Sigmoid colon (tissue), 7 donors: ENCODE measurements at regions of chr13 and their contacts with region 1.

Region 1: DNA sequence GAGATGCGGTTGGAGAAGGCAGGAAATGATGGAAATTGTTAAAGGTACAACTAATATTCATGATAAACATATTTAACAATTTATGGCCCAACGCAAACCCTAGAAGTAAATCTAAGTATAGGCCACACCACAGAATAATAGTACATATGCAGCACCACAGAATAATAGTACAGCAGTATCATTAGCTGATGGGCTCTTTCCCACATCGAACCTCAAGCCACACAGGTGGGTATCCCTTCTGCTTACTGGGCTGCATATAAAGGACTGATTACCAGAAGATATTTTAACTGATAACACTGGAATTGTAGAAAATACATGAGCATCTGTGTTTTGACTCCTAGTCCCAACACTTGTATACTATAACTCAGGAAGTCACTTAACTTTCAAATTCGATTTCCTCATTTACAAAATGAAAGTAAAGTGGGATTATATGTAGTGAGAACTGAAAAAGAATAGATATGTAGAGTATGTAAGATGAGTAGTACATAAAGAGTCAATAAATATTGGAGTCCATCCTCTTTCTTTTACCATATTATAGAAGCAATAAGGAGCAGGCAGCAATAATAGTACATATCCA is 91.5 kb downstream of the TSC22D1 start:
- DNase-seq: no peak
- H3K4me3 ChIP-seq: no peak overlapping the region
- H3K27ac ChIP-seq: no peak overlapping the region
- H3K4me1 ChIP-seq: no peaks in the 10 kb centered on the region
- H3K27me3 ChIP-seq: no peaks in the 10 kb centered on the region
- CTCF ChIP-seq: no peak
- EP300 ChIP-seq: no peak
- POLR2A ChIP-seq: no peak

Region 2: GRCh38 chr13:44350775-44351509 is 133.7 kb before region 1 on chr13:
- intact Hi-C with region 1: no loop called
- DNase-seq: no peak
- H3K4me3 ChIP-seq: no peak overlapping the region
- H3K27ac ChIP-seq: no peak overlapping the region
- H3K4me1 ChIP-seq: peaks cover 0 to 33% (median 5%) of the 10 kb centered on the region in 4 donors
- H3K27me3 ChIP-seq: no peaks in the 10 kb centered on the region
- CTCF ChIP-seq: no peak
- EP300 ChIP-seq: no peak
- POLR2A ChIP-seq: no peak

Region 3: DNA sequence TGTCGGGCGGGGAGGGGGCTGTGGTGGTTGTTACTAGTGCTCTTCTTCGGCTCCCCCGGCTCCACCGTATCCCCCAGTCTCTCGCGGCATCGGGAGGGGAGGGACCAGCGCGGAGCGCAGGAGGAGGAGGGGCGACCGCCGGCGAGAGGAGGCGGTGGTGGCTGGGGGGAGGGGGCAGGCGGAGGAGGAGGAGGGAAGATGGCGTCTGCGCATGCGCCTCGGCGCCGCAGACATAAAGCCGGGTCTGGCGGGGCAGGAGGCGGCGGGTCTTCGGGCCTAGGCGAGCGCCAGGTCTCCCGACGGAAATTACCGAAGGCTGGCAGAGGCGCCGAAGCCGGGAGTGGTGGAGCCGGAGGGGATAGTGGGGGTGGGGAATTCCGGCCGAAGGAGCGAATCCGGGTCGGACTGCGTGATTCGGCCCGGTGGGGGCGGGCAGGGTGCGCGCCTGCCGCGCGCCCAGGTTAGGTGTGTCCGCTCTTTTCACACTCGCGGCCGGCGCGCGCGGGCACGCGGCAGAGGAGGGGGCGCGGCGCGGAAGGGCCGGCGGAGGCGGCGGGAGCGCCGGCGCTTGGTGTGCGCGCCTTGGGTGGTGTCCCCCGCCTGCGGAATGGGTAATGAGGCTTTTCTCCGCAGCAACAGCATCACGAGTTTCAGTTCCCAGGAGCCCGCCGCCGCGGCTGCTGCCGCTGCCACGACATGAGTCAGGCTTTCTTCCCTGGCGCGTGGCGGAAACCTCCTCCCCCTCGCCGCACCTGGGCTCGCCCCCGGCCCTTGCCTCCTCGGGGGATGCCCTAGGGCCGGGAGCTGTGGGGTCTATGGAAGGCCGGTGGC is 92.8 kb after region 1 on chr13:
- intact Hi-C with region 1: loop called (anchors 5 kb)
- DNase-seq: peak; percentile 98
- H3K4me3 ChIP-seq: peak overlapping the region; percentile 81 to 95 (median 89)
- H3K27ac ChIP-seq: peak overlapping the region; percentile 97 to 99 (median 99)
- H3K4me1 ChIP-seq: peaks cover 0 to 40% (median 28%) of the 10 kb centered on the region in 4 donors
- H3K27me3 ChIP-seq: no peaks in the 10 kb centered on the region
- CTCF ChIP-seq: no peak
- EP300 ChIP-seq: no peak
- POLR2A ChIP-seq: peak; percentile 40 to 55